Esophagus muscularis mucosa (tissue), 4 donors: ENCODE measurements at regions of chr11 and their contacts with region 1.

Region 1: DNA sequence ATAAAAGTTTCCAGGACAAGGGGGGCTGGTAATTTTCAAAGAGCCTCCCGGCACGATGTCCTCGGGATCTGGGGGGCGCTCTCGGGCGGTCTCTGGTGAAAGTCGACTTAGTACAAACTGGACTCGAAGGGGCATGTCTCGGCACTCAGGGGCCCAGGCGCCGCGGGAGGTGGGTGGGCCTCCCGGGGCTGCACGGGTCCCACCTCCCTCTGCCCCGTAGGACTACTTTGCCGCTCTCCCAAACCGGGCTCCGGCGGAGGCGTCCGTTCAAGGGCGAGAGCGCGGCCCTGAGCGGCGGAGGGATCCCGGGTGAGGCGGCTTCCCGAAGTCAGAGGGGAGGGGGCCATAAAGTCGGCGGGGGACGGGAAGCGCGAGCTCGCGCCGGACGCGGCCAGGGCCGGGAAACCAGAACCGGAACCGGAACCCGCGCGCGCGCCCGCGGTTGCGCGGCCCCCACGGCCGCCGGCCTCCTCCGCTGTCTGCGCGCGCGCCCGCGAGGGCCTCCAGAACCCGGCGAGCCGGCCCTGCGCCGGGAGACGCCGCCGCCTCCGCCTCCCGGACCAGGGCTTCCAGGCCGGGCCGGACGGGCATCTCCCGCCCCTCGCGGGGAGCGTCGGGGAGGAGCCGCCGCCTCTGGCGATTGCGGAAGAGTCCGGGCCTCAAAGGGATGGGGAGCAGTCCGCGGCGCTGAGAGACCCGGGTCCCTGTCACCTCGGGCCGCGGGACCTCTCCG is at the start of gene ARHGEF12:
- DNase-seq: peak; percentile 97
- H3K4me3 ChIP-seq: peak within 1 kb of the TSS; percentile 86 to 99 (median 96)
- H3K27ac ChIP-seq: peak within 1 kb of the TSS; percentile 99 to 100 (median 99)
- H3K4me1 ChIP-seq: peaks cover 41 to 74% (median 70%) of the 10 kb centered on the region in 4 donors
- H3K27me3 ChIP-seq: no peaks in the 10 kb centered on the region
- CTCF ChIP-seq: peak; percentile 18 to 27 (median 21)
- EP300 ChIP-seq: peak; percentile 22
- POLR2A ChIP-seq: peak; percentile 63
- total RNA-seq, gene ARHGEF12: 89.1 to 118 (median 106) TPM

Region 2: DNA sequence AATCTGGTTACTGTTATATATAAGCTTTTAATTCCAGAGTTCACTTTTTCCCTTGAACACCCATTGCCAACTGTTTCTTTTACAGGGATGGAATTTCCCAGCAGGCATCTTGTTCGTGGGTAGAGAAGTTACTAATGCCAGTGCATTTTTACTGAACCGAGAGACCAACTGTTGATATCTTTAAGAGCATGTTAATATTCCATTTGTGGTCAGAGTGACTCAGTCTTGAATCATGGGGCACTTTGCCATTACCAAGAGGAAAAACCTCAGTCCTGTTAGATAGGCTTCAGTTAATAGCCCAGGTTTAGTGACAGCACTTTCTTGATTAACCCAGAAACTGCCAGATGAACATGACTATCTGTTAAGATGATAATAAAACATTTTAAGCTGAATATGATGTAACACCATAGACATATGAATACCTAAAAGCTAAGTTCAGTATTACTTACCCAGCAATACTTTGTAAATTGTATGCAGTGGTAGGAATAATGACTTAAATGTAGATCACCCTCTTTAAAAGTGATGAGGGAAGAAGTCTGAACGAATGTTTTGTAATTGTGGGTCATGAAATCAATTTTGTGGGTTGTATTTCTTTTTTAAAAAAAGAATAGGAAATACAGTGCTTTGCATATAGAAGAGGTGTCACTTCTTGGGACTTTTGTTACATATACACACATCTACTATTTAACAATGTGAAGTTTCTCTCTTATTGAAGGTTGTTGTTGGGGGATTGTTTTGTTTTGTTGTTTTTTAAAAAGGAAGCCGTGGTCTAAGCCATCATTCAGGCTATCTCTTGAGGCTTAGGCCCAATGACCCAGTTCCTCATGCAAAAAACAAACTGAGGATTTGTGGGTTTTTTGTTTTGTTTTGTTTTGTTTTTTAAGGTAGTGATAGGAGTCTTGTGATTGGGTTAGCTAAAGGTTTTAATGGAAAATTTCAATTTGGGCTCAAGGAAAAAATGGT is 96.3 kb after region 1 on chr11:
- intact Hi-C with region 1: loop called (anchors 2 kb)
- DNase-seq: no peak
- H3K4me3 ChIP-seq: peak overlapping the region in 1 of 4 donors; percentile 2
- H3K27ac ChIP-seq: peak overlapping the region; percentile 56 to 72 (median 64)
- H3K4me1 ChIP-seq: peaks cover 13 to 19% (median 18%) of the 10 kb centered on the region in 4 donors
- H3K27me3 ChIP-seq: no peaks in the 10 kb centered on the region
- CTCF ChIP-seq: no peak
- EP300 ChIP-seq: no peak
- POLR2A ChIP-seq: no peak

Region 3: DNA sequence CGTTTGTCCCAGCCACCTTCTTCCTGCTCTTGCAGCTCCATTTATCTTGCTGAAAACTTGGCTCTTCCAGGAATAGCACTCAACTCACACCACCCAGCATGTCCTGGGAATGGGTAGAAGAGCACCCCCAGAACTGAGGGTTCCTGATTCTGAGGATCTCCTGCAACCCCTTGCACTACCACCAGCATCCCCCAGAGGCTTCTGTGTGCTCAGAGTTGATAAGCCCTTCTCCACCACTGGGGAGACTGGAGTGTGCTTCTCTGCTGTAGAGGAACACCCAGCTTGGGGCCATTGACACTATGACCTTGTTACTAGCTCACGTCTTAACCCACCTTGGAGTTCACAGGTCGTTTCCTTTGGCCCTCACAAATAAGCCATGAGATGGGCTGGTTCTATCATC is 296.5 kb after region 1 on chr11:
- intact Hi-C with region 1: no loop called
- DNase-seq: no peak
- H3K4me3 ChIP-seq: no peak overlapping the region
- H3K27ac ChIP-seq: no peak overlapping the region
- H3K4me1 ChIP-seq: no peaks in the 10 kb centered on the region
- H3K27me3 ChIP-seq: peaks cover 0 to 13% (median 0%) of the 10 kb centered on the region in 4 donors
- CTCF ChIP-seq: no peak
- EP300 ChIP-seq: no peak
- POLR2A ChIP-seq: no peak